ENCODE measurements at regions of chr16 and their contacts with region 1.

Region 1: DNA sequence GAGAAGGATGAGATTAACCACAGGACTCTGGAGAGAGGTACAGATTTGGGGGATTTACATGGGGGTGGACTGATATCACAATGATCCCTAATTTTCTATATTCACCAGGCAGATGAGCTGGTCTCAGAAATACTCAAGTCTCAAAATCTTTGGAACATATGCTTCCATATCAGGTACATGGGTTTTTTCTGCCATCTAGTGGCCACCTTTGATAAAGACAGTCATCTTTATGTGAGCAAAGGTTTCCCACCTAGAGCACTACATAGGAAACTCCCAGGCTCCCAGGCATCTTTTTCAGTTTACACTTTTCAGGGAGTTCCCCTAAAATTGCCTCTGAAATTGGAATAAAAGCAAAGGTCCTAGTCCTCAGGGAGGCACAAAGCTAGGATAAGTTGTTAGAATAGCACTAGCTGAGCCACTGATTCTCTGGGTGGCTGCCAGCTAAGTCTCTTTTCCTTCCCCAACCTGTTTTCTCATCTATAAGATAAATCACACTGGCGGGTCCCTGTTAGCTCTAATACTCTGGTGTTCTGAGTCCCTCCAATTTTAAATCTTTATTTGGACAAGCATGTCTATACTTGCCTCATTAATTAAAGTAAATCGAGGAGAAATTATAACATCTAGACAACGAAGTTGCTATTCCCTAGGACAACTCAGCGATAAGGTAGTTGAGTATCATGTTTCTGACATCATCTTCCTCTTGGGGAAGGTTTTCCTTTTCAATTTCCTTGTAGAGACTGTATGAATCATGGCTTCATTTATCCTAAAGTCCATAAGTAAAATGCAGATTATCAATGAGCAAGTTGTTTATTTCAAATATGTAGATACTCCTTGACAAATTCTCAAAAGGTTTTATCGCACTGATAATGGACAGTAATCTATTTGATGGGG is 19.0 kb upstream of the MON1B start:
- DNase-seq: peak in 2 of 6 donors; percentile 31 to 33
- ATAC-seq: peak in 3 of 4 donors; percentile 87 to 89 (median 88)
- H3K4me3 ChIP-seq: no peak overlapping the region
- H3K27ac ChIP-seq: no peak overlapping the region
- H3K4me1 ChIP-seq: no peaks in the 10 kb centered on the region
- H3K27me3 ChIP-seq: peaks cover 0 to 8% (median 0%) of the 10 kb centered on the region in 4 donors
- CTCF ChIP-seq: peak; percentile 59 to 63 (median 60)

Region 2: DNA sequence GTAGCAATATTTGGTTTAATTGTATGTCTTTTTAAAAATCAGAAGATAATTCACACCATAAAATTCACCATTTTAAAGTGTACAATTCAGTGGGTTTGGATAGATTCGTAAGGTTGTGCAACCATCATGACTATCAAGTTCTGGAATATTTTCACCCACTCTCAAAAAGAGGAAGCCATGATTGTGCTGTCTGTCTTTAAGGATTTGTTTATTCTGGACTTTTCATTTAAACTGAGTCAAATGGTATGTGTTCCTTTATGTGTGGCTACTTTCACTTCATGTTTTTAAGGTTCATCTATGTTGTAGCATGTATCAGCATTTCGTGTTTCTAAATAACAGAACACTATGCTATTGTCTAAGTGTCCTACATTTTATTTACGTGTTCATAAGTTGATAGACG is 1377.6 kb before region 1 on chr16:
- intact Hi-C with region 1: loop called in 2 of 3 experiments (anchors 10 kb)
- DNase-seq: no peak
- ATAC-seq: peak in 1 of 4 donors; percentile 37
- H3K4me3 ChIP-seq: no peak overlapping the region
- H3K27ac ChIP-seq: no peak overlapping the region
- H3K4me1 ChIP-seq: no peaks in the 10 kb centered on the region
- H3K27me3 ChIP-seq: no peaks in the 10 kb centered on the region
- CTCF ChIP-seq: no peak

Region 3: DNA sequence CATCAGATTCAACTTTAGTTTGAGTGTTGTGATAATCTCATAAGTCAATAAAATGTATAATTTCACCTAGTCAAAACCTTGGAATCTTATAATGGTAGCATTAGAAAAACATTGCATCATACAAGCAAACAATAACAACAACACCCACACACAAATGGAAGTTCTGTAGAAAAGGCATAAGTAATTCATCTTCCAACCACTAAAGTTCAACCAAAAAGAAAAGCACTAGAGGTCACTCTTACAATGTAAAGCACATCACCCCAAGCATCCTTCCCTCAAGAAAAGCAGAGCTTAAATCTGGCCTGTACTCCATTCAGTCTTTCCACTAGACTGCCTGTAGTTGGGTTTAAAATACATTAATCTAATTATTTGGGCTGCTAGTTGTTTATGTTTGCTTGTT is 893.0 kb before region 1 on chr16:
- intact Hi-C with region 1: loop called in 1 of 3 experiments (anchors 10 kb)
- DNase-seq: no peak
- ATAC-seq: peak in 3 of 4 donors; percentile 34 to 57 (median 51)
- H3K4me3 ChIP-seq: no peak overlapping the region
- H3K27ac ChIP-seq: no peak overlapping the region
- H3K4me1 ChIP-seq: no peaks in the 10 kb centered on the region
- H3K27me3 ChIP-seq: peaks cover 0 to 5% (median 0%) of the 10 kb centered on the region in 4 donors
- CTCF ChIP-seq: no peak

Region 4: DNA sequence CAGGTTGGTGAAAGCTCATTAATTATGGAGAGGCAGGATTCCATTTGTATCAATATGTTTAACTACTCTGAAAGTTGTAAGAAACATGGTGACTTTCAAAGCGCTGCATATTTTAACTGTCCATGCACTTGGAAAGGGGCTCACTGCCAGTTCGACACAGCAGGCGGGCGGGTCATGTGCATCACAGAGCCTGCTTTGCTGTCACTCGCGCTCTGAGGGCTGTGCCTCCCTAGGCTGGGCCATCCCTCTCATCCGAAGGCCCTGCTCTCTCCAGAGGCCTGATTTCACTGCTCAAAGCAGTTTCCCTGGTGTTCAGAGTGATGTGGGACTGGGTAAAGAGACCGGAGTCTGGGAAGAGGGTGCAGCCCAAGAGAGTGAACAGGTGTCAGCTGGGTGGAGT is 403.0 kb before region 1 on chr16:
- intact Hi-C with region 1: no loop called
- DNase-seq: no peak
- ATAC-seq: no peak
- H3K4me3 ChIP-seq: no peak overlapping the region
- H3K27ac ChIP-seq: no peak overlapping the region
- H3K4me1 ChIP-seq: no peaks in the 10 kb centered on the region
- H3K27me3 ChIP-seq: no peaks in the 10 kb centered on the region
- CTCF ChIP-seq: no peak

Measured in pancreas (tissue), 10 donors.